B cell (primary cell): ENCODE measurements at regions of chr3 and their contacts with region 1.

Region 1: GRCh38 chr3:151168269-151169094 is 34.5 kb downstream of the GPR171 start:
- DNase-seq: peak; percentile 69
- ATAC-seq: peak; percentile 31
- H3K4me3 ChIP-seq: no peak overlapping the region
- H3K4me3 Mint-ChIP-seq: no peak overlapping the region
- H3K27ac ChIP-seq: no peak overlapping the region
- H3K27ac Mint-ChIP-seq: no peak overlapping the region
- H3K4me1 ChIP-seq: peaks cover 35 to 38% of the 10 kb centered on the region in 2 donors
- H3K4me1 Mint-ChIP-seq: peaks cover 33% of the 10 kb centered on the region
- H3K27me3 ChIP-seq: no peaks in the 10 kb centered on the region
- H3K27me3 Mint-ChIP-seq: no peaks in the 10 kb centered on the region
- CTCF ChIP-seq: peak; percentile 79

Region 2: GRCh38 chr3:151146071-151146730 is 22.3 kb before region 1 on chr3:
- CTCF ChIA-PET with region 1: interaction called, 15 read pairs
- POLR2A ChIA-PET with region 1: no interaction called
- intact Hi-C with region 1: no loop called
- DNase-seq: peak; percentile 80
- ATAC-seq: peak; percentile 99
- H3K4me3 ChIP-seq: peak overlapping the region in 3 of 5 experiments; percentile 7 to 48 (median 29)
- H3K4me3 Mint-ChIP-seq: no peak overlapping the region
- H3K27ac ChIP-seq: no peak overlapping the region
- H3K27ac Mint-ChIP-seq: no peak overlapping the region
- H3K4me1 ChIP-seq: peaks cover 9 to 17% of the 10 kb centered on the region in 2 donors
- H3K4me1 Mint-ChIP-seq: peaks cover 4% of the 10 kb centered on the region
- H3K27me3 ChIP-seq: peaks cover 0 to 4% (median 0%) of the 10 kb centered on the region in 4 experiments
- H3K27me3 Mint-ChIP-seq: peaks cover 3% of the 10 kb centered on the region
- CTCF ChIP-seq: peak; percentile 86

Region 3: GRCh38 chr3:151216641-151217607 is 48.4 kb after region 1 on chr3:
- CTCF ChIA-PET with region 1: interaction called, 11 read pairs
- POLR2A ChIA-PET with region 1: no interaction called
- intact Hi-C with region 1: no loop called
- DNase-seq: no peak
- ATAC-seq: no peak
- H3K4me3 ChIP-seq: no peak overlapping the region
- H3K4me3 Mint-ChIP-seq: no peak overlapping the region
- H3K27ac ChIP-seq: no peak overlapping the region
- H3K27ac Mint-ChIP-seq: no peak overlapping the region
- H3K4me1 ChIP-seq: no peaks in the 10 kb centered on the region
- H3K4me1 Mint-ChIP-seq: no peaks in the 10 kb centered on the region
- H3K27me3 ChIP-seq: no peaks in the 10 kb centered on the region
- H3K27me3 Mint-ChIP-seq: no peaks in the 10 kb centered on the region
- CTCF ChIP-seq: no peak

Region 4: DNA sequence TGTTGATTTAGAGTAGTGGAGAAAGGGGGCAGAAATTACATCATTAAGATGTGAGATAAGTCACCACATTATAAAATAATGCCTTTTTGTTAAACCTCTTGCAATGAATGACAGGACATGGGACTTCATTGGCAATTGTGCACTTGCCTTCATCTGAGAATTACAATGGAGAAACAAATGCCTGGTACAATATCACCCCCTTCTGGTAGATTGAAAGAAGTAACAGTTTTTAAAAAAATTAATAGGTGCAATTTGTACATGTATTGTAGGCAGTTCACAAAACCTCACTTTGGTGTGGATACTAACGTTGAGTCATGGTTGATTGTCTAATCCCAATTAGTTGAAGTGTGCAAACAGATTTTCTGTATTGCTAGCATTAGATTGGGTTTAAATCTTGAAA is 114.4 kb after region 1 on chr3:
- CTCF ChIA-PET with region 1: interaction called, 201 read pairs
- POLR2A ChIA-PET with region 1: no interaction called
- intact Hi-C with region 1: loop called (anchors 1 kb)
- DNase-seq: peak; percentile 78
- ATAC-seq: peak; percentile 17
- H3K4me3 ChIP-seq: no peak overlapping the region
- H3K4me3 Mint-ChIP-seq: no peak overlapping the region
- H3K27ac ChIP-seq: no peak overlapping the region
- H3K27ac Mint-ChIP-seq: no peak overlapping the region
- H3K4me1 ChIP-seq: peaks cover 30 to 31% of the 10 kb centered on the region in 2 donors
- H3K4me1 Mint-ChIP-seq: peaks cover 28% of the 10 kb centered on the region
- H3K27me3 ChIP-seq: no peaks in the 10 kb centered on the region
- H3K27me3 Mint-ChIP-seq: no peaks in the 10 kb centered on the region
- CTCF ChIP-seq: peak; percentile 84

Region 5: GRCh38 chr3:151327571-151328198 is 159.2 kb after region 1 on chr3:
- CTCF ChIA-PET with region 1: interaction called, 26 read pairs
- POLR2A ChIA-PET with region 1: no interaction called
- intact Hi-C with region 1: no loop called
- DNase-seq: peak; percentile 33
- ATAC-seq: no peak
- H3K4me3 ChIP-seq: peak overlapping the region in 1 of 5 experiments; percentile 82
- H3K4me3 Mint-ChIP-seq: no peak overlapping the region
- H3K27ac ChIP-seq: no peak overlapping the region
- H3K27ac Mint-ChIP-seq: peak overlapping the region; percentile 75
- H3K4me1 ChIP-seq: peaks cover 7 to 8% of the 10 kb centered on the region in 2 donors
- H3K4me1 Mint-ChIP-seq: peaks cover 26% of the 10 kb centered on the region
- H3K27me3 ChIP-seq: no peaks in the 10 kb centered on the region
- H3K27me3 Mint-ChIP-seq: no peaks in the 10 kb centered on the region
- CTCF ChIP-seq: peak; percentile 81